WTC11 (cell line): ENCODE measurements at regions of chr7 and their contacts with region 1.

Region 1: DNA sequence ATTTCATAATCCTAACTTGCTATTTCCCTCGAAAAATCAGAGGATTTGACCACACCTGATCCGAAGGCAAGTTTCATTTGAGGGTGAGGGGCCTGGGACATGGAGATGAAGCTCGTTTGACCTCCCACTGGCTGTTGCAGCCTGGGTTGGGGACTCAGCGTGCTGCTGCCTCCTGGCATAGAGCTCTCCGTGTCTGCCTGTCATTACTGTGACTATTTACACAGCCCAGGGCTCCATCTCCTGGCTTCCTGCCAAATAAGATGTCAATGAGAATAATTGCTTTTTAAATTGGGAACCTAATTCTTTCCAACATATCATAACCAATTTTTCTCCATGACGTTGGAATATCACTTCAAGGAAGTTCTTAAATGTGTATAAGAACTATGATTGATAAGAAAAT is 139.3 kb upstream of the COBL start:
- DNase-seq: peak; percentile 27
- ATAC-seq: 0 out of 2 replicates have a peak, but pooled peaks have one; percentile 6
- H3K4me3 Mint-ChIP-seq: no peak overlapping the region
- H3K27ac Mint-ChIP-seq: no peak overlapping the region
- H3K4me1 Mint-ChIP-seq: peaks cover 48% of the 10 kb centered on the region
- H3K27me3 Mint-ChIP-seq: peaks cover 11% of the 10 kb centered on the region
- CTCF ChIP-seq: no peak

Region 2: GRCh38 chr7:51263631-51264484 is 192.1 kb before region 1 on chr7:
- CTCF ChIA-PET with region 1: no interaction called
- POLR2A ChIA-PET with region 1: no interaction called
- DNase-seq: no peak
- ATAC-seq: no peak
- H3K4me3 Mint-ChIP-seq: no peak overlapping the region
- H3K27ac Mint-ChIP-seq: peak overlapping the region; percentile 57; the same call in 1 of the 2 replicates
- H3K4me1 Mint-ChIP-seq: peaks cover 31% of the 10 kb centered on the region
- H3K27me3 Mint-ChIP-seq: no peaks in the 10 kb centered on the region
- CTCF ChIP-seq: no peak

Region 3: DNA sequence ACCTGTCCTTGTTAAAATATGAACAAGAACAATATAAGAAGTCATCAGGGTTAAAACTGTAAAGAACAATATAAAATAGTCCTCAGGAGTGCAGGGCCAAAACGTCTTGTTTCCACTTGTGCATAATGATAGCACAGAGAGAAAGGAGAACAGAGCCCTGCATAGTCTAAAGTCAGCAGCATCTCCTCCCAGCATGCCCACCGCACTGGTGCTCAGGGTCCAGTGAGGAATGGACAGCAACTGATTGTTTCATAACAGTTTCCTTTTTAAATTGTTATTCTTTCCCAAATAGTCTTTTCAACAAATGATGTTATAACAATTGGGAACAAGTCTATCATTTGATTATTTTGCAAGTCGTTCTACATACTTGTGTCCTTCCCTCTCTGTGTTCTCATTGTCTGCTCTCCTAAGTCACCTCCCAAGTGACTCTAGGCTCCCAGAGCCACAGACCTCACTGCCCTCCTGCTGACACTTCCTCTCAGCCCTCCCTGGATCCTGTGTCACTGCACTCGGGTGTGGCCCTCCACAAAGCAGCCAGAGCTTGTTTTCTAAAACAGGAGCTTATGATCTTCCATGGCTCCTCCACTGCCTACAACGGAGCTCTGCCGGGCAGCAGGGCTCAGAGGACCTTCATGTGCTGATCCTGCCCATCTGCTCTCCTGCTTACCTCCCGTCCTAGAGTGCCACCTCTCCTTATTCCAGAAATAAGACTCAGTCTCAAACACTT is 166.9 kb before region 1 on chr7:
- CTCF ChIA-PET with region 1: no interaction called
- POLR2A ChIA-PET with region 1: no interaction called
- DNase-seq: no peak
- ATAC-seq: no peak
- H3K4me3 Mint-ChIP-seq: no peak overlapping the region
- H3K27ac Mint-ChIP-seq: peak overlapping the region; percentile 50
- H3K4me1 Mint-ChIP-seq: peaks cover 47% of the 10 kb centered on the region
- H3K27me3 Mint-ChIP-seq: no peaks in the 10 kb centered on the region
- CTCF ChIP-seq: no peak

Region 4: DNA sequence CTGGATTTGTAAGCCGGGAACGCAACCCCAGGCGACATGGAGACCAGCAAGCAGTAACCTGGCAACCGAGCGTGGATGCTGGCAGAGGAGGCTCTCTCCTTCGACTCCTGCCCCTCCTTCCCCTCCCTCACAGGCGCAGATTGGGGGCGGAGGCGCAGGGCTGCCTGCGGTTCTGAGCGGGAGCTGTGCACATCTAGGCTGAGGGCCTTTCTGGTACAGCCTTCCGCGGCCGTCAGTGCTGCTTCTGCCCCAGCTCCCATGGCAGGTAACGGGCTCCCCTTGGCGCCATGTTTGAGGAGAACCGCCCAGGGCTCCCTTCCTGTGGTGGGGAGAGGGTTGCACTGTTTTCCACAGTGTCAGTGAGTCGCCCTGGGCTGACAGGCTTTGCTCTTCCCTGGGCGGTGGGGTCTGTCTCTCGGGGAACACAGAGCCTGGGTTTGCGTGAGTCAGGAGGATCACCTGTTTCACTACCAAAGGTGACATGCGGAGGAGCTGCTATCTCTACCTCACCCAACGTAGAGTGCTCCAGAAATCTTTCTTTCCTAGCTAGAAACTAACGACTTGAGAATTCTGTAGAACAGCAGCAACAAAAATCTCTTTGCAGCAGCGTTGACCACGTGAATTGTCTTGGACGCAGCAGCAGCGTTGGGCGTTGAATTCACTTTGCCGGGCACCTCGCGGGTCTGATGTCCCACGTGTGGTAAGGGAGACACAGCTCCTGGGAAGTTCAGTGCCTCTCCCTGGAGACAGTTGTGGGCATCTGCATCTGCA is 15.4 kb after region 1 on chr7:
- CTCF ChIA-PET with region 1: interaction called, 14 read pairs
- POLR2A ChIA-PET with region 1: no interaction called
- DNase-seq: peak; percentile 62
- ATAC-seq: peak; percentile 92
- H3K4me3 Mint-ChIP-seq: peak overlapping the region; percentile 61
- H3K27ac Mint-ChIP-seq: no peak overlapping the region
- H3K4me1 Mint-ChIP-seq: peaks cover 18% of the 10 kb centered on the region
- H3K27me3 Mint-ChIP-seq: peaks cover 31% of the 10 kb centered on the region
- CTCF ChIP-seq: no peak

Region 5: GRCh38 chr7:51647931-51648351 is 192.0 kb after region 1 on chr7:
- CTCF ChIA-PET with region 1: no interaction called
- POLR2A ChIA-PET with region 1: no interaction called
- DNase-seq: no peak
- ATAC-seq: no peak; the same call in 1 of the 2 replicates
- H3K4me3 Mint-ChIP-seq: no peak overlapping the region
- H3K27ac Mint-ChIP-seq: no peak overlapping the region
- H3K4me1 Mint-ChIP-seq: peaks cover 4% of the 10 kb centered on the region; the same call in 1 of the 2 replicates
- H3K27me3 Mint-ChIP-seq: no peaks in the 10 kb centered on the region
- CTCF ChIP-seq: no peak